ENCODE measurements at regions of chr4 and their contacts with region 1.

Region 1: DNA sequence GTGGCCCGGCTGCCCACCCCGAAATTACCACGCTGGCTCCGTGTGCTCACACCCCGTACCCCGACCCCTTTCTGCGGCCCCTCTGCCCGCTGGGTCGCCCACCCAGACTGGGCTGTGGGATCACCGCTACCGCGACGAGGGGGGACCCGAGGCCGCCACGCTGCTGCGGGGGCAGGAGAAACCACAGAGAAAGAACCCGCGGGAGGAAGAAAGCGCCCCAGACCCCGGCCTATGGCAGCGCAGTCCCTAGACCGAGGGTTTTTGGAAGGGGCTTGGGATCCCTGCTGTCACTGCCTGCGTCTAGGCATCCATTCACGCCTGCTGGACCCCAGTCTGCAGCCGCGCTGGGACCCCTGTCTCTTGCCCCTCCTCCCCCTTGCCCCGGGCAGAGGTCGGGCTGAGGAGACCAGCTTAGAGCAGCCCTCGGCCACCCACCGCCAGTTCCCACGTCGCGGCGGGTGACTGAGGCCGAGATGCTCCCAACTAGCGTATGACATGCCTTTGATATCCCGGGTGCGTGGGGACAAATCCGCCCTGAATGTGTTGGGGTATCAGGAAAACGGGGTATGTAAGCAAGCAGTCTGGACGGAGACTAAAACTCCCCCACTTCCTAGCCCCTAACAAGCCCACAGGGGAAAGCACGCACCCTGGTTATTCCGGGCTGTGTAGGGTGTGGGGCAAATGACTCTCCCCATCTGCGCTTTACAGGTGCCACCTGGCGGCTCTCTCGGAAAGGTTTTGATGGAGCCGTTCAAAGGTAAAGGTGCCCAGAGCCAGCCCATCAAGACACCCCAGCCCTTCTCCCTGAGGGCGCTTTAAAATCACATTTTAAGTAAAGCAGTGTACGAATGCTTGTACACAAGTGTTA is 862 bp upstream of the INPP4B start:
- DNase-seq: peak; percentile 57
- ATAC-seq: peak; percentile 81
- H3K4me3 ChIP-seq: peak overlapping the region; percentile 63 to 69
- H3K27ac ChIP-seq: peak overlapping the region; percentile 65; the same call in 1 of the 2 replicates
- H3K4me1 ChIP-seq: peaks cover 10 to 25% of the 10 kb centered on the region in 2 experiments
- H3K27me3 ChIP-seq: no peaks in the 10 kb centered on the region
- CTCF ChIP-seq: peak; percentile 68 to 72 (median 69); a peak in 5 of 6 replicates
- POLR2A ChIP-seq: no peak
- RAD21 ChIP-seq: peak; percentile 95

Region 2: GRCh38 chr4:140861359-140862176 is 1985.4 kb before region 1 on chr4:
- CTCF ChIA-PET with region 1: no interaction called
- POLR2A ChIA-PET with region 1: no interaction called
- RAD21 ChIA-PET with region 1: no interaction called
- intact Hi-C with region 1: loop called (anchors 10 kb)
- DNase-seq: peak; percentile 74
- ATAC-seq: peak; percentile 56
- H3K4me3 ChIP-seq: no peak overlapping the region
- H3K27ac ChIP-seq: no peak overlapping the region
- H3K4me1 ChIP-seq: peaks cover 3 to 12% of the 10 kb centered on the region in 2 experiments; a peak in 3 of 4 replicates
- H3K27me3 ChIP-seq: no peaks in the 10 kb centered on the region
- CTCF ChIP-seq: peak; percentile 70 to 82 (median 70); a peak in 5 of 6 replicates
- POLR2A ChIP-seq: no peak
- RAD21 ChIP-seq: peak; percentile 90

Region 3: DNA sequence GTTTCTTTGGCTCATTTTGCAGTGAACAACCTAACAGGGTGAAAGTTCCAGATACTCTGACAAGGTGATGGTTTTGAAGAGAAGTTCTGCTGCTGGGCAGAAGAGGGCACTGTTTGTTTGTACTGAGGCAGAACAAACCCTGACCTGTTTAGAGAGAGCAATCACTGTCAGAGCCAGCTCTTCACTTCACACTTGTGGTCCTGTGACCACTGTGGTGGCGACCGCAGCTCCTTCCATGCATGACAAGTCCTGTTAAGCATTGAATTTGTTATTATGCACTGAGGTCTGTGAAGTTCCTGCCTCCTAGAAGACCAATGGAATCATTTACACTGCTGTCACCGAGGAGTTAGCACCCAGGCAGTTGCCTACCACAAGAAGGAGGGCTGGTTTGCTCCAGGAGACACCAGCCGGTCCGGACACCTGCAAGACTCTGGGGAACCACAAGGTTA is 1539.7 kb before region 1 on chr4:
- CTCF ChIA-PET with region 1: no interaction called
- POLR2A ChIA-PET with region 1: no interaction called
- RAD21 ChIA-PET with region 1: no interaction called
- intact Hi-C with region 1: loop called (anchors 2 kb)
- DNase-seq: peak; percentile 45
- ATAC-seq: peak; percentile 99
- H3K4me3 ChIP-seq: no peak overlapping the region
- H3K27ac ChIP-seq: no peak overlapping the region
- H3K4me1 ChIP-seq: no peaks in the 10 kb centered on the region
- H3K27me3 ChIP-seq: no peaks in the 10 kb centered on the region
- CTCF ChIP-seq: peak; percentile 52 to 67 (median 53); a peak in 5 of 6 replicates
- POLR2A ChIP-seq: no peak
- RAD21 ChIP-seq: peak; percentile 84

Region 4: GRCh38 chr4:141860974-141861373 is 986.0 kb before region 1 on chr4:
- CTCF ChIA-PET with region 1: interaction called, 3 read pairs
- POLR2A ChIA-PET with region 1: no interaction called
- RAD21 ChIA-PET with region 1: no interaction called
- intact Hi-C with region 1: loop called (anchors 2 kb)
- DNase-seq: peak; percentile 16
- ATAC-seq: peak; percentile 80
- H3K4me3 ChIP-seq: no peak overlapping the region
- H3K27ac ChIP-seq: no peak overlapping the region
- H3K4me1 ChIP-seq: no peaks in the 10 kb centered on the region
- H3K27me3 ChIP-seq: no peaks in the 10 kb centered on the region
- CTCF ChIP-seq: peak; percentile 31 to 61 (median 54); a peak in 5 of 6 replicates
- POLR2A ChIP-seq: no peak
- RAD21 ChIP-seq: peak; percentile 77

Region 5: GRCh38 chr4:142282870-142283431 is 564.0 kb before region 1 on chr4:
- CTCF ChIA-PET with region 1: no interaction called
- POLR2A ChIA-PET with region 1: no interaction called
- RAD21 ChIA-PET with region 1: no interaction called
- intact Hi-C with region 1: loop called (anchors 2 kb)
- DNase-seq: no peak
- ATAC-seq: 0 out of 2 replicates have a peak, but pooled peaks have one; percentile 32
- H3K4me3 ChIP-seq: no peak overlapping the region
- H3K27ac ChIP-seq: no peak overlapping the region
- H3K4me1 ChIP-seq: peaks cover 0 to 6% of the 10 kb centered on the region in 2 experiments; a peak in 1 of 4 replicates
- H3K27me3 ChIP-seq: no peaks in the 10 kb centered on the region
- CTCF ChIP-seq: peak in 2 of 3 experiments; percentile 60 to 67; a peak in 4 of 6 replicates
- POLR2A ChIP-seq: no peak
- RAD21 ChIP-seq: peak; percentile 54